ENCODE measurements at regions of chr5 and their contacts with region 1.

Region 1: DNA sequence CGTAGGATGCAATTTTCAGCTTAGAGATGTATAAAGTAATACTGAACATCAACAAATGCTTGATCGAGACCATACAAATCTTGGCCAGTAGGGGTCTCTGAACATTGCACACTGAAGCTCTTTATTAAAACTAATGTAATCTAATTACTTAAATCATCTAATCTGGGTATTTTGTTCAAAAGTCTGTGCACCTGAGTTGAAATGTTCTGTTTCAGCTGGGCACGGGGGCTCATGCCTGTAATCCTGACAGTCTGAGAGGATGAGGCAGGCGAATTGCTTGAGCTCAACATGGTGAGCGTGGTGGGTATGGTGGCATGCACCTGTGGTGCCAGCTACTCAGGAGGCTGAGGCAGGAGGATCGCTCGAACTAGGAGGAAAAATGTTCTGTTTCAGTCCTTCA is 41.0 kb downstream of the ESM1 start:
- DNase-seq: peak in 7 of 9 donors; percentile 18 to 61 (median 51)
- ATAC-seq: peak; percentile 63
- H3K4me3 ChIP-seq: no peak overlapping the region
- H3K4me3 Mint-ChIP-seq: no peak overlapping the region
- H3K27ac ChIP-seq: no peak overlapping the region
- H3K27ac Mint-ChIP-seq: no peak overlapping the region
- H3K4me1 ChIP-seq: no peaks in the 10 kb centered on the region
- H3K4me1 Mint-ChIP-seq: peaks cover 0 to 32% (median 0%) of the 10 kb centered on the region in 7 donors
- H3K27me3 ChIP-seq: no peaks in the 10 kb centered on the region
- H3K27me3 Mint-ChIP-seq: peaks cover 0 to 18% (median 0%) of the 10 kb centered on the region in 5 donors

Region 2: GRCh38 chr5:54852007-54852406 is 92.4 kb before region 1 on chr5:
- CTCF ChIA-PET with region 1: no interaction called
- POLR2A ChIA-PET with region 1: no interaction called
- intact Hi-C with region 1: no loop called
- DNase-seq: no peak
- ATAC-seq: no peak
- H3K4me3 ChIP-seq: no peak overlapping the region
- H3K4me3 Mint-ChIP-seq: no peak overlapping the region
- H3K27ac ChIP-seq: no peak overlapping the region
- H3K27ac Mint-ChIP-seq: no peak overlapping the region
- H3K4me1 ChIP-seq: no peaks in the 10 kb centered on the region
- H3K4me1 Mint-ChIP-seq: no peaks in the 10 kb centered on the region
- H3K27me3 ChIP-seq: no peaks in the 10 kb centered on the region
- H3K27me3 Mint-ChIP-seq: peaks cover 13 to 51% (median 19%) of the 10 kb centered on the region in 5 donors

Region 3: DNA sequence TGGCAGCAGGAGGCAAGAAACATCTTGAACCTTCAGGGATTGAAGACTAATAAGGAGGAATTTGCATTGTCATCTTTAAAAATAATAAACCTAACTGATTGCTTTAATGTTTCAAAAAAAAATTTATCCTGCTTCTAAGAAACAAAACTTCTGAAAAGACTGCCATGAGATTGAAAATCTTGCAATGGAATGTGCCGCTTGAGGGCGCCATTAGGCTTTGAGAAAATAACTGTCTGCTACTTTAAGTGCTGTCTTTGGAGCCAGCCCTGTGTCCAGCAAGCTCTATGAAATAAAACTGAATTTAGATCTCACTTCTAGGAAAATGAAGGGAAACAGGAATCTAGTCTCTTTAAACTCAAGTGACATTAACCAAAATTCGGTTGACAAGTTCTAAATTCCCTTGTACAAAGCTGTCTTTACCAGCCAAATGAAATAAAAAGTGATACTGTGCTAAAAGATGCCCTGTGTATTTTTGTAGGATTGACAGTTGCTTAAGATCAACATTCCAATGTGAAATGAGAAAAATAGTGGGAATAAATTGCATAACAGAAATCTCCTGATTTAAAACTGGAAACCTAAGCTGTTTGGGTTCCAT is 38.3 kb before region 1 on chr5:
- CTCF ChIA-PET with region 1: interaction called, 18 read pairs
- POLR2A ChIA-PET with region 1: no interaction called
- intact Hi-C with region 1: loop called (anchors 1 kb)
- DNase-seq: peak; percentile 26 to 65 (median 53)
- ATAC-seq: peak; percentile 55
- H3K4me3 ChIP-seq: no peak overlapping the region
- H3K4me3 Mint-ChIP-seq: no peak overlapping the region
- H3K27ac ChIP-seq: no peak overlapping the region
- H3K27ac Mint-ChIP-seq: no peak overlapping the region
- H3K4me1 ChIP-seq: peaks cover 0 to 10% of the 10 kb centered on the region in 2 donors
- H3K4me1 Mint-ChIP-seq: peaks cover 6 to 64% (median 10%) of the 10 kb centered on the region in 7 donors
- H3K27me3 ChIP-seq: no peaks in the 10 kb centered on the region
- H3K27me3 Mint-ChIP-seq: peaks cover 0 to 51% (median 6%) of the 10 kb centered on the region in 5 donors

Region 4: DNA sequence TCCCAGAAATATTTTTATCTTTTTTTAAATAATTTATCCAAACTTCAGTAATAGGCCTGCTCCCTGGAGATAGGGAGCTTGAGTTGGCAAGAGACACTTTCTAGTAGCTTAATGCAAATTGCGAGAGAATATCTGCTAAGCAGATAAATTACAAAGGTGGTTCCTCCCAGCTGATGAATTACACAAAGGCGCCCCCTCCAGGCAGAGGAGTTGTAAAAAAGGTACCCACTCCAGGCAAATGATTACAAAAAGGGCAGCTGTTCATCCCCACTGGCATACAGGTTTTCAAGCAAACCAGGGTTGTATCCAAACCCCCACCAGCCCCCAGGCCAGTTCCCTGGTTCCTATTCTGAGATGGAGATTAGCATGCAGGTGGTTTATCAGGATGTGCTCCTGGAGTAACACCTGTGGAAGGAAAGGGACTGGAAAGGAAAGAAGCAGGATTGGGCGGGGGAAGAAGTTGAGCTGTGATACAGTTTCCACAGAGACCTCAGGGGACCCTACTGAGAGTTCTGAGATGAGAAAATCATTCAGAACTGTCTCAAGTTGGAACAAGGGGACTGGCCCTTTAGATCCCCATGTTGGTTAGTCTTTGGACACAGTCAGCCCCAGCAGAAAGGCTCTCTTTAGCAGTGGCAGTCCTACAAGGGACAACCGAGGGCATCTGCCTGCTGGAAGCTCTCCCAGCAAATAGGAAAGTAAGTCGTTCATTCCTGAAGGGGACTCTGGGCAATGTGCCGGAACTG is 15.5 kb after region 1 on chr5:
- CTCF ChIA-PET with region 1: interaction called, 10 read pairs
- POLR2A ChIA-PET with region 1: no interaction called
- intact Hi-C with region 1: no loop called
- DNase-seq: no peak
- ATAC-seq: no peak
- H3K4me3 ChIP-seq: no peak overlapping the region
- H3K4me3 Mint-ChIP-seq: no peak overlapping the region
- H3K27ac ChIP-seq: no peak overlapping the region
- H3K27ac Mint-ChIP-seq: peak overlapping the region in 1 of 9 donors; percentile 63
- H3K4me1 ChIP-seq: no peaks in the 10 kb centered on the region
- H3K4me1 Mint-ChIP-seq: peaks cover 0 to 15% (median 6%) of the 10 kb centered on the region in 7 donors
- H3K27me3 ChIP-seq: no peaks in the 10 kb centered on the region
- H3K27me3 Mint-ChIP-seq: peaks cover 0 to 38% (median 0%) of the 10 kb centered on the region in 5 donors

Region 5: GRCh38 chr5:55062039-55062779 is 117.8 kb after region 1 on chr5:
- CTCF ChIA-PET with region 1: interaction called, 10 read pairs
- POLR2A ChIA-PET with region 1: interaction called, 4 read pairs
- intact Hi-C with region 1: loop called in 1 of 2 experiments (anchors 1 kb)
- DNase-seq: peak in 7 of 9 donors; percentile 25 to 71 (median 46)
- ATAC-seq: peak; percentile 81
- H3K4me3 ChIP-seq: peak overlapping the region; percentile 33
- H3K4me3 Mint-ChIP-seq: peak overlapping the region; percentile 43 to 94 (median 82)
- H3K27ac ChIP-seq: no peak overlapping the region
- H3K27ac Mint-ChIP-seq: peak overlapping the region; percentile 17 to 98 (median 62)
- H3K4me1 ChIP-seq: peaks cover 26 to 30% of the 10 kb centered on the region in 2 donors
- H3K4me1 Mint-ChIP-seq: peaks cover 28 to 80% (median 67%) of the 10 kb centered on the region in 7 donors
- H3K27me3 ChIP-seq: no peaks in the 10 kb centered on the region
- H3K27me3 Mint-ChIP-seq: peaks cover 0 to 7% (median 0%) of the 10 kb centered on the region in 5 donors

Region 6: DNA sequence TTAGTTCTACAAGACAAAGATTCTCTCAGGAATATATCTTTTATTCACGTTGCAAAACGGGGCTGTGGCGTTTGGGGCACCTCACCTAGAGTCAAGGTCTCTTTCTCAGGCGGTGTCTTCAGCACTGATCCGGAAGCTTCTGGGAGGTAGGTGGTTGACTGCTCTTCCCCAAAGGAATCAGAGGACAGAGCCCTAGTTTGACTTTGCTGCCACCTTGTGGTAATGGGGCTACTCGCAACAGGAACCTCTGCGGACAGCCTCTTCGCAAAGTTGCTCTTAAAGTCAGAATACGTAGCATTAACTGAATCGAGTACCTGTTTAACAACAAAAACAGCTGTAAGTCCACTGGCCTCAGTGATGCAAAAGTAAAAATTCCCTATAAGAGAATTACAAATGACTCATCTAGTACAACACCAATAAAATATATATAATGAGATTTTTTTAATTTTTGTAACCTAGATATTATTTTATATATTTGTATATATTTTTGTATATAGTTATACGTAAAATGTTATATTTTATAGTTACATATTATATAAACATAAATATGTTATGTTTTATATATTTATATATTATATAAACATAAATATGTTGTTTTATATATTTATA is 202.3 kb after region 1 on chr5:
- CTCF ChIA-PET with region 1: interaction called, 61 read pairs
- POLR2A ChIA-PET with region 1: interaction called, 4 read pairs
- intact Hi-C with region 1: loop called (anchors 1 kb)
- DNase-seq: peak; percentile 47 to 84 (median 77)
- ATAC-seq: peak; percentile 91
- H3K4me3 ChIP-seq: no peak overlapping the region
- H3K4me3 Mint-ChIP-seq: peak overlapping the region in 7 of 10 donors; percentile 21 to 74 (median 42)
- H3K27ac ChIP-seq: no peak overlapping the region
- H3K27ac Mint-ChIP-seq: peak overlapping the region in 6 of 9 donors; percentile 1 to 60 (median 27)
- H3K4me1 ChIP-seq: peaks cover 5 to 14% of the 10 kb centered on the region in 2 donors
- H3K4me1 Mint-ChIP-seq: peaks cover 12 to 38% (median 20%) of the 10 kb centered on the region in 7 donors
- H3K27me3 ChIP-seq: no peaks in the 10 kb centered on the region
- H3K27me3 Mint-ChIP-seq: peaks cover 0 to 62% (median 0%) of the 10 kb centered on the region in 5 donors

Region 7: GRCh38 chr5:55226027-55226933 is 281.9 kb after region 1 on chr5:
- CTCF ChIA-PET with region 1: no interaction called
- POLR2A ChIA-PET with region 1: no interaction called
- intact Hi-C with region 1: no loop called
- DNase-seq: peak in 4 of 9 donors; percentile 11 to 62 (median 29)
- ATAC-seq: peak; percentile 54
- H3K4me3 ChIP-seq: peak overlapping the region; percentile 30
- H3K4me3 Mint-ChIP-seq: peak overlapping the region; percentile 59 to 83 (median 70)
- H3K27ac ChIP-seq: no peak overlapping the region
- H3K27ac Mint-ChIP-seq: peak overlapping the region in 1 of 9 donors; percentile 18
- H3K4me1 ChIP-seq: peaks cover 16 to 21% of the 10 kb centered on the region in 2 donors
- H3K4me1 Mint-ChIP-seq: peaks cover 19 to 48% (median 46%) of the 10 kb centered on the region in 7 donors
- H3K27me3 ChIP-seq: peaks cover 21 to 66% of the 10 kb centered on the region in 2 donors
- H3K27me3 Mint-ChIP-seq: peaks cover 79 to 90% (median 86%) of the 10 kb centered on the region in 5 donors